ENCODE measurements at regions of chr4 and their contacts with region 1.

Region 1: GRCh38 chr4:38654273-38654672 is 9.7 kb upstream of the KLF3 start:
- DNase-seq: no peak
- ATAC-seq: no peak
- H3K4me3 ChIP-seq: no peak overlapping the region
- H3K27ac ChIP-seq: no peak overlapping the region
- H3K4me1 ChIP-seq: peaks cover 0 to 14% (median 0%) of the 10 kb centered on the region in 12 donors
- H3K27me3 ChIP-seq: no peaks in the 10 kb centered on the region
- CTCF ChIP-seq: no peak
- POLR2A ChIP-seq: no peak

Region 2: DNA sequence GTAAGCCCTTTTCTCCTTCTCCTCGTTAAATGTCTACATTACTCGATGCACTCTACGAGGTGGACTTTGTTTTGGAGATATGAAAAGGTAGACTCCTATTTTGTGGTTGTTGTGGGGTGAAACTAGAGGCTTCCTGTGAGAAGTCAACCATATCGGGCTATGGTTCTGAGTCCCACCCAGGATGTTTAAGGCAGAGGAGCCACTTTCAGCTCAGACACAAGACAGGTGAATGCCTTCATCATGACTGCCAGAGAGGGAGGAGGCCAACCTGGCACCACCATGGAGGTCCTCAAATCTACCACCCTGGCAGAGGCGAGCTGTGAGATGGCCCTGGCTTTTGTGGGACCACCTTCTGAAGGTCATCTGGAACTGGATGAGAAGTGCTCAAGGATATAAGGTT is 144.7 kb before region 1 on chr4:
- intact Hi-C with region 1: no loop called
- DNase-seq: no peak
- ATAC-seq: no peak
- H3K4me3 ChIP-seq: peak overlapping the region in 1 of 12 donors; percentile 23
- H3K27ac ChIP-seq: peak overlapping the region in 1 of 12 donors; percentile 62
- H3K4me1 ChIP-seq: no peaks in the 10 kb centered on the region
- H3K27me3 ChIP-seq: no peaks in the 10 kb centered on the region
- CTCF ChIP-seq: no peak
- POLR2A ChIP-seq: no peak

Region 3: GRCh38 chr4:38562751-38563198 is 91.5 kb before region 1 on chr4:
- intact Hi-C with region 1: loop called in 1 of 10 experiments (anchors 10 kb)
- DNase-seq: peak in 4 of 5 donors; percentile 55 to 68 (median 64)
- ATAC-seq: peak; percentile 79 to 96 (median 90)
- H3K4me3 ChIP-seq: no peak overlapping the region
- H3K27ac ChIP-seq: peak overlapping the region in 9 of 12 donors; percentile 28 to 77 (median 54)
- H3K4me1 ChIP-seq: peaks cover 0 to 42% (median 29%) of the 10 kb centered on the region in 12 donors
- H3K27me3 ChIP-seq: no peaks in the 10 kb centered on the region
- CTCF ChIP-seq: no peak
- POLR2A ChIP-seq: no peak

Measured in heart left ventricle (tissue), 16 donors.